ENCODE measurements at regions of chr1 and their contacts with region 1.

Region 1: GRCh38 chr1:179081687-179082332 is at the start of gene TOR3A:
- DNase-seq: peak; percentile 97
- H3K4me3 Mint-ChIP-seq: peak within 1 kb of the TSS; percentile 86
- H3K27ac Mint-ChIP-seq: peak within 1 kb of the TSS; percentile 92
- H3K4me1 Mint-ChIP-seq: peaks cover 13% of the 10 kb centered on the region
- H3K27me3 Mint-ChIP-seq: no peaks in the 10 kb centered on the region
- CTCF ChIP-seq: no peak
- total RNA-seq, gene TOR3A: 38.8 and 40.0 TPM in 2 replicates

Region 2: GRCh38 chr1:178532392-178532791 is 549.4 kb before region 1 on chr1:
- CTCF ChIA-PET with region 1: interaction called, 3 read pairs
- intact Hi-C with region 1: loop called (anchors 5 kb)
- DNase-seq: peak; percentile 91
- H3K4me3 Mint-ChIP-seq: no peak overlapping the region
- H3K27ac Mint-ChIP-seq: no peak overlapping the region
- H3K4me1 Mint-ChIP-seq: peaks cover 47% of the 10 kb centered on the region
- H3K27me3 Mint-ChIP-seq: no peaks in the 10 kb centered on the region
- CTCF ChIP-seq: peak; percentile 97

Region 3: DNA sequence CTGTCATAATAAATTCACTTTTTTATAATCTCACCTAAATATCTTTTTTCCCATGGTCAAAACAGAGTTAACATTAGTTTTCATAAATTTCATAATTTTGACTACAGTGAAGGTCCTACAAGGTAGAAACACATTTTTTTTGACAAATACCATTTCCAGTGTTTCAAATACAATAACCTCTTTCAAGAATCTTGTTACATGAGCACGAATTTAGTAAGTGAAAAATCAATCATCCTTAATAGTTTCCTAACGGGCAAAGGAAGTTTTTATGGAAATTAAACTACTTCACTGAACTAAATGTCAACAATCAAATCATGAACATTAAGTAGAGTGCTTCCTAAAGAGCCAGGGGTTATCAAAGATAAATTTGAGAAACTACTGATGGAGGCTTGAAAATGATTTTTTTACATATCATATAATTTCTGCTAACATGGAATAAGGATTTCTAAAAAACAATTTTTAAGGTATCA is 112.3 kb after region 1 on chr1:
- CTCF ChIA-PET with region 1: no interaction called
- intact Hi-C with region 1: loop called (anchors 2 kb)
- DNase-seq: no peak
- H3K4me3 Mint-ChIP-seq: no peak overlapping the region
- H3K27ac Mint-ChIP-seq: peak overlapping the region; percentile 62
- H3K4me1 Mint-ChIP-seq: peaks cover 23% of the 10 kb centered on the region
- H3K27me3 Mint-ChIP-seq: no peaks in the 10 kb centered on the region
- CTCF ChIP-seq: no peak

Region 4: GRCh38 chr1:179251675-179252074 is 169.9 kb after region 1 on chr1:
- CTCF ChIA-PET with region 1: no interaction called
- intact Hi-C with region 1: loop called (anchors 1 kb)
- DNase-seq: no peak
- H3K4me3 Mint-ChIP-seq: no peak overlapping the region
- H3K27ac Mint-ChIP-seq: no peak overlapping the region
- H3K4me1 Mint-ChIP-seq: no peaks in the 10 kb centered on the region
- H3K27me3 Mint-ChIP-seq: no peaks in the 10 kb centered on the region
- CTCF ChIP-seq: no peak

Region 5: DNA sequence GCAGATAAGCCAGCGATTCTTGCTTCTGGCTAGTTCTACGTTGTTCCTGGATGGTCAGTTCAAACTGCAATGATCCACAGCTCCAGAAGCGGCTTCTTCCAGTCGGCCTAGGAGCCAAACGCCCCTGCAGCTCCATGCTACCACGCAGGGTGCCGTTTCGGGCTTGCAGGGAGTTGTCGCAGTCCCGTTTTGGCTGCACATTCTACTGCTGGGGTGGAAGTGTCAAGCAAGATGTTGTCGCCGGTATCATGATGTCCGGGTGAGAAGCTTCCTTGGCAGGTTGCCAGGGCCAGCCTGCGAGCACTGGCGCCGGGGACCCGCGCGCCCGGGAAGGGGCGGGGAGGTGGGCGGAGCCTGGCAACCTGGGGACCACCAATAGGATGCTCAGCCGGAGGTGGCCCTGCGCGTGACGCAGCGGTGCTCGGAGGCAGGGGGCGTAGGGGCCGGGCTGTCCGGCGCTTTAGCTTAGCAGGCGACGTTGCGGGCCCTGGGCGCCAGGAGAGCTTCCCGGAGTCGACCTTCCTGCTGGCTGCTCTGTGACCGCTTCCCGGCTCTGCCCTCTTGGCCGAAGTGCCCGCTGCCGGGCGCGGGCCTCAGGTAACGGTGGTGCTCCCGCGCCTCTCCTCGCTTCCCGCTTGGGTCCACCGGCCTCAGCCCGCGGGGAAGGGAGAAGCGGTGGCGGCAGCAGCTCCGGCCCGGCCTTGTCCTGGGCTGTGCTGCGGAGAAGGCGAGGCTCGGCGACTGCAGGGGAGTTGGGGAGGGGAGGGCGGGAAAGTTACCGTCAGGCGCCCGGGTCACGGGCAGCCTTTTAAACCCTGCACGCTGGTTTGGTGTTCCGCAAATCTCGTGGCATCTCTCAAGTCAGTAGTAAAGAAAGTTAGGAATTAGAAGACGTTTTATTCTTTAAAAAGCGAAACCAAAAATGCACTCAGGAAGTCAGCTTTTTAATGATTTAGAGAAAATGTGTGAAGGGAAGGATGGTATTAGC is 211.8 kb after region 1 on chr1 and contains the start of gene SOAT1:
- CTCF ChIA-PET with region 1: no interaction called
- intact Hi-C with region 1: loop called (anchors 2 kb)
- DNase-seq: peak; percentile 98
- H3K4me3 Mint-ChIP-seq: peak within 1 kb of the TSS; percentile 99
- H3K27ac Mint-ChIP-seq: peak within 1 kb of the TSS; percentile 93
- H3K4me1 Mint-ChIP-seq: peaks cover 46% of the 10 kb centered on the region
- H3K27me3 Mint-ChIP-seq: no peaks in the 10 kb centered on the region
- CTCF ChIP-seq: peak; percentile 35
- total RNA-seq, gene SOAT1: 134 and 190 TPM in 2 replicates

Region 6: DNA sequence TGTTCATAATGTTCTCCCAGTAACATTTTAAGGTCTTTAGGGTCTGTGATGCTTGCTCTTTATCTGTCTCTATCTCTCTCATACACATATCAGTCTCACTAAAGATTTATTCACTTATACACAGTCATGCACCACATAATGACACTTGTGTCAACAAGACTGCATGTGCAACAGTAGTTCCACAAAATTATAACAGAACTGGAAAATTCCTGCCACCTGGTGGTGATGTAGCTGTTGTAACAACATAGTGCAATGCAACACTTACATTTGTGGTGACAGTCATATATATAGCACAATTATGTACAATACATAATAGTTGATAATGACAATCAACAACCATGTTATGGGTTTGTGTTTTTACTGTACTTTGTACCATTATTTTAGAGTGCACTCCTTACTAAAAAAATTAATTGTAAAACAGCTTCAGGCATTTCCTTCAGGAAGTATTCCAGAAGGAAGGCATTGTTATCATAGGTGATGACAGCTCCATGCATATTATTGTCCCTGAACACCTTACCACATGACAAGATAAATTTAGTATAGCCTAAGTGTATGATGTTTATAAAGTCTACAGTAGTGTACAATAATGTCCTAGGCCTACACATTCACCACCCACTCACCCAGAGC is 517.9 kb after region 1 on chr1:
- CTCF ChIA-PET with region 1: no interaction called
- intact Hi-C with region 1: loop called (anchors 5 kb)
- DNase-seq: peak; percentile 67
- H3K4me3 Mint-ChIP-seq: no peak overlapping the region
- H3K27ac Mint-ChIP-seq: no peak overlapping the region
- H3K4me1 Mint-ChIP-seq: peaks cover 9% of the 10 kb centered on the region
- H3K27me3 Mint-ChIP-seq: peaks cover 70% of the 10 kb centered on the region
- CTCF ChIP-seq: peak; percentile 45

Region 7: DNA sequence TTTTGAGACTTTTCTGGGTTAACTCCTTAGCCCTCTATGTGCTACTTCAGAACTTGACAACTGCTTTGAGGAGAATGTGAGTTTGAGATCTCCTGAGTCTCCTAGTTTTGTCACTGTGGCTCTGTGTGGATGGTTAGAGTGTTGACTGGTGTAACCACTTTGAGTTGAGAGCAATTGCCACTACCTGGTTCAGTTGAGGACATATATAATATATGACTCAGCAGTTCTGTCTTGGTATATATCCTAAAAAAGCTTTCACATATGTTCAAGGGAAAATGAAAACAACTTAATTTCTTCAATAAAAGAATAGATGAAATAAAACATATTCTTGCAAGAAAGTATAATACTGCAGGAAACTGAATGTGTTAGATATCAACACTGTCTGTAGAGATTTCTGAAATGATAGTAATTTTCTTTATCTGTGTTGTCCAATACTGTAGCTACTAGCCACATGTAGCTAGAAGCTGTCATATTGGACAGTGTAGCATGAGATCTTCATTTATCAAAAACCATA is 976.1 kb after region 1 on chr1:
- CTCF ChIA-PET with region 1: no interaction called
- intact Hi-C with region 1: no loop called
- DNase-seq: no peak
- H3K4me3 Mint-ChIP-seq: no peak overlapping the region
- H3K27ac Mint-ChIP-seq: no peak overlapping the region
- H3K4me1 Mint-ChIP-seq: no peaks in the 10 kb centered on the region
- H3K27me3 Mint-ChIP-seq: no peaks in the 10 kb centered on the region
- CTCF ChIP-seq: no peak

Measured in Calu3 (cell line).